ENCODE measurements at regions of chr12 and their contacts with region 1.

Region 1: DNA sequence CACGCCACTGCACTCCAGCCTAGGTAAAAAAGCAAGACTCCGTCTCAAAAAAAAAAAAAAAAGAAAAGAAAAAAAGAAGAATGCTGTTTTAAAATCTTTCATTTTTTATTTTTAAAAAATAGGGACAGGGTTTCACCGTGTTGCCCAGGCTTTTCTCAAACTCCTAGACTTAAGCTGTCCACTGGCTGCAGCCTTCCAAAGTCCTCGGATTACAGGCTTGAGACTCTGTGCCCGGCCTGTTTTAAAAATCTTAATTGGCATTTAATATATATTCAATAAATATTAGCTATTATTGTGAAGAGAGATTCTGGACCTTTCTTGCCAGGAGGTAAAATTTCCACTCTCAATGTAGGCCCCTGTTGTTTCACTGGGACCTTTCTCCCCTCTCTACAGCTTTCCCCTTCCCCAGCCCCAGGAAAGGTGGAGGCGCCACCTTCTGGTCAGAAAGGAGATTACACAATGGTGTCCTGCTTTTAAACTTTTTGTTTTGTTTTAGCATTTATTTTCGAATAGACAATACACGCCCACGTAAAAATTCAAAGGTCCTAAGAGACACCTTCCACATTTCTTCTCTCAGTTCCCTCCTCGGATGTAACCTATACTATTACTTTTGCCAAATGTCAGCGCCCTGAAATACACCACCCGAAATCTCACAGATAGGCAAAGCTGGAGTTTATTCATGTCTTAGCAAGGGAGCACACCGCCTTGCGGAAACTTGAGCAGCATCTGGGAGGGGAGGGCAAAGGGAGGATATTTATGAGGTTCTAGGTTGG is 23.8 kb upstream of the PHC1 start:
- DNase-seq: peak; percentile 29 to 78 (median 61)
- ATAC-seq: peak; percentile 91
- H3K4me3 ChIP-seq: peak overlapping the region; percentile 71
- H3K4me3 Mint-ChIP-seq: peak overlapping the region; percentile 77 to 100 (median 90)
- H3K27ac ChIP-seq: peak overlapping the region; percentile 59
- H3K27ac Mint-ChIP-seq: peak overlapping the region in 8 of 9 donors; percentile 8 to 92 (median 80)
- H3K4me1 ChIP-seq: no peaks in the 10 kb centered on the region
- H3K4me1 Mint-ChIP-seq: peaks cover 0 to 12% (median 5%) of the 10 kb centered on the region in 7 donors
- H3K27me3 ChIP-seq: no peaks in the 10 kb centered on the region
- H3K27me3 Mint-ChIP-seq: peaks cover 0 to 27% (median 0%) of the 10 kb centered on the region in 5 donors

Region 2: DNA sequence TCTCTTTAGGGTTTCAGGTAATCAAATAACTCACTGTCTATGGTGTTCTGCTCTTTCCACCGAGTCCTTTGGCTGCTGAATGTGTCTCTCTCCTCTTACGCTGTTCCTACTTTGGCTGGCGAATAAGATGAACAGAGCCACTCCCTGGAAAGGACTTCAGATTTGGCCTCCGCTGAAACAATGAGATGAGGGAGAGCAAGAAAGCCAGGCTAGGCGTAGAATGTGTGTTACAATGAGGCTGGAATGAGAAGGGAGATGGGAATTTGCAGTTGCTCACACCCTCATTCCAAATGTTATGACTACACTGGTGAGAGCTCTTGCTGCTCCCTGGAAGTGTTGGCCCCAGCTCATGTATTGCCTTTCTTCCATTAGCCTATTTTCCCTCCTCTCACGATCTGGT is 227.9 kb before region 1 on chr12 and contains the start of gene MFAP5:
- CTCF ChIA-PET with region 1: interaction called, 12 read pairs
- POLR2A ChIA-PET with region 1: no interaction called
- intact Hi-C with region 1: loop called (anchors 1 to 5 kb)
- DNase-seq: no peak
- ATAC-seq: no peak
- H3K4me3 ChIP-seq: no peak within 1 kb of the TSS
- H3K4me3 Mint-ChIP-seq: no peak within 1 kb of the TSS
- H3K27ac ChIP-seq: no peak within 1 kb of the TSS
- H3K27ac Mint-ChIP-seq: no peak within 1 kb of the TSS
- H3K4me1 ChIP-seq: no peaks in the 10 kb centered on the region
- H3K4me1 Mint-ChIP-seq: peaks cover 0 to under 1% (median 0%) of the 10 kb centered on the region in 7 donors
- H3K27me3 ChIP-seq: no peaks in the 10 kb centered on the region
- H3K27me3 Mint-ChIP-seq: peaks cover 5 to 16% (median 8%) of the 10 kb centered on the region in 5 donors
- total RNA-seq, gene MFAP5: not detected

Region 3: DNA sequence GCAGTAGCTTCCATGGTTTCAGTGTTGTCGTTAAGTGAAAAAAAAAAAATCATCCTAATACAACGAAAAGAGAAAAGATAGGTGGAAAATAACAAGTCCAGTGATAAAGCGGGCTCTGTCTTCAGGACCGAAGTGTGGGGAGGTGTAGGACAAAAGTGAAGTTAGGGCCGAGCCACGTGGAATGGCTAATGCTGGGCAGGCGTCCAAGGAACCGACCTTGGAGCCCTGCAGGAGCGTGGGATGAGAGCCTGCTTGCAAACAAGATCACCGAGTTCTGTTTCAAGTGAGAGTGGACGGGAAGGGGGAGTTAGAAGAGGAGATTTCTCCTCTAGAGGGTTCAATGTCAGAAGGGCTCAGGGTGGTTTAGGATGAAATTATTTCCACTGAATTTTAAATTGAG is 45.8 kb before region 1 on chr12:
- CTCF ChIA-PET with region 1: no interaction called
- POLR2A ChIA-PET with region 1: no interaction called
- intact Hi-C with region 1: no loop called
- DNase-seq: no peak
- ATAC-seq: no peak
- H3K4me3 ChIP-seq: no peak overlapping the region
- H3K4me3 Mint-ChIP-seq: no peak overlapping the region
- H3K27ac ChIP-seq: no peak overlapping the region
- H3K27ac Mint-ChIP-seq: no peak overlapping the region
- H3K4me1 ChIP-seq: no peaks in the 10 kb centered on the region
- H3K4me1 Mint-ChIP-seq: peaks cover 0 to 6% (median 3%) of the 10 kb centered on the region in 7 donors
- H3K27me3 ChIP-seq: no peaks in the 10 kb centered on the region
- H3K27me3 Mint-ChIP-seq: peaks cover 0 to 11% (median 2%) of the 10 kb centered on the region in 5 donors

Region 4: DNA sequence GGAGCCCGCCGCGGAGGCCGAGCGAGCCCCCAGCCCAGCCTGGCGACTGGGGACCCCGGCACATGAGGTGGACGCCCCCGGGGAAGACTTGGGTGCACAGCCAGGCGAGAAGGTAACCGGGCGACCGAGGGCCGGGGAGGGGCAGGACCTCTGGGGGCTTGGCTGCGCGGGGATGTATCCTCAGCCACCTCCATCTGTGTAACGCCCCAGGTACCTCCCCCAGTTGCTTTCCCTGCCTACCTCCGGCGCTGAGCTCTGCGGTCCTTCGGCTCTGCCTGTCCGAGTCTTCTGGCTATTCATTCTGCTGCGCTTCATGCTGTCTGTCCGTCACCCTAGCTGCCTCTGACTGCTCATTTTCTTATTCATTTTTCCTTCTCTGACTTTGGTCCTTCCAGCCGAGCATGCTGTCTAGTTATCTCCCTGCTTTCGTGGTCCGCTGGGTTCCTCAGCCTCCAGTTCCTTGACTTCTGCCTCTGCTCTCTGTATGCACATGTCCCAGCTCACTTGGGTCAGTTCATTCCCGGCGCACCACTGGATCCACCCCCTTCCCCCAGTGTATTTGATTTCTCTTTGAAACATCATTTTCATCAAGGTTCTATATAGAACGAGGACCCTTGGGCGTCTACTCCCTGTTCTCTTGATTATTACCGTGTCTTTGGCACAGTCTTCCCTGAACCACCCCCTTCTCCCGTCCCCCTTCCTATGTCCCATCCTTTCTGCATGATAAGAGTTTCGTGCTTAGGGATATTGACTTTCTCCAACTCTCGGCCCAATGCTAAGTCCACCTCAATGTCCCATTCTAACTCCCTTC is 24.4 kb after region 1 on chr12:
- CTCF ChIA-PET with region 1: interaction called, 8 read pairs
- POLR2A ChIA-PET with region 1: no interaction called
- intact Hi-C with region 1: loop called in 1 of 2 experiments (anchors 1 kb)
- DNase-seq: peak; percentile 37 to 68 (median 60)
- ATAC-seq: peak; percentile 83
- H3K4me3 ChIP-seq: peak overlapping the region; percentile 73
- H3K4me3 Mint-ChIP-seq: no peak overlapping the region
- H3K27ac ChIP-seq: peak overlapping the region; percentile 79
- H3K27ac Mint-ChIP-seq: no peak overlapping the region
- H3K4me1 ChIP-seq: peaks cover 14 to 25% of the 10 kb centered on the region in 2 donors
- H3K4me1 Mint-ChIP-seq: peaks cover 7 to 20% (median 16%) of the 10 kb centered on the region in 7 donors
- H3K27me3 ChIP-seq: no peaks in the 10 kb centered on the region
- H3K27me3 Mint-ChIP-seq: peaks cover 0 to 16% (median 0%) of the 10 kb centered on the region in 5 donors